ENCODE measurements at regions of chr10 and their contacts with region 1.

Region 1: GRCh38 chr10:3948843-3949242 is 163.8 kb upstream of the KLF6 start:
- DNase-seq: peak; percentile 83 to 93 (median 88)
- H3K4me3 ChIP-seq: no peak overlapping the region
- H3K4me3 Mint-ChIP-seq: peak overlapping the region; percentile 64 to 85 (median 83)
- H3K27ac ChIP-seq: peak overlapping the region; percentile 52
- H3K27ac Mint-ChIP-seq: peak overlapping the region; percentile 93 to 98 (median 97)
- H3K4me1 ChIP-seq: peaks cover 67% of the 10 kb centered on the region
- H3K4me1 Mint-ChIP-seq: peaks cover 43 to 80% (median 59%) of the 10 kb centered on the region in 4 donors
- H3K27me3 ChIP-seq: no peaks in the 10 kb centered on the region
- H3K27me3 Mint-ChIP-seq: no peaks in the 10 kb centered on the region

Region 2: DNA sequence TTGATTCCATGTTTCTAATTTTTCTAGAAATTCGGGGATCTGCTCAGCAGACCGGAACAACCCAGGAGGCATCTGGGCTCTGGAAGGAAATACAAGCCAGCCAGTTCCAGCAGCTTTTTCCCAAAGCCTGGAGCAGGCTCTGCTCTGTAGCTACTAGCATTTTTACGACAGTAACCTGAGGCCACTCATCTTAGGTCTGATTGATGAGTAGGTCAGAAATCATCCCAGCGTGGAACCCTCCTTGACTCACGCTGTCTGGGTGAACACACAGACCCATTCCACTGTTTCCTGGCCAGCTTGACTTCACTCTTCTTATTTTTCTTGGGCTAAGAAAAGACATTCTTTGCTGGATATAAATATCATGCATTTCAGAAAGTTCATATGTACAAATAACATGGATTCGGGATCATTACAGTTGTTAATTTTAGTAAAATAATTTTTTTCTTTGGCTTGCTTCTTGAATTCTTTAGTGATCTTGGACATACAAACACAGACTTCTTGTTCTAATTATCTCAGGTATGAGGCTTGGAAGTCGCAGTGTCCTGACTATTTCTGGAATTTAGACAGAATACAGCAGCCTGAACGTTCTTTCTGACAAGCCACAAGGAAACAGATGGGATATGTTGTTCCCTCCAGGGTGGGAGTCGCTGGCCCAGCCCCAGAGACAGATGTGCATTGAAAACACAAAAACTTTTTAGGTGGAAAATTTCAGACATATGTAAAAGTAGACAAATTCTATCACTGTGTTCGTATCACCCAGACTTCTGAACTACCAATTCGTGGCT is 721.7 kb before region 1 on chr10:
- CTCF ChIA-PET with region 1: no interaction called
- POLR2A ChIA-PET with region 1: no interaction called
- intact Hi-C with region 1: loop called (anchors 5 kb)
- DNase-seq: no peak
- H3K4me3 ChIP-seq: no peak overlapping the region
- H3K4me3 Mint-ChIP-seq: peak overlapping the region in 6 of 8 donors; percentile 6 to 67 (median 56)
- H3K27ac ChIP-seq: no peak overlapping the region
- H3K27ac Mint-ChIP-seq: peak overlapping the region in 4 of 7 donors; percentile 65 to 94 (median 86)
- H3K4me1 ChIP-seq: peaks cover 19% of the 10 kb centered on the region
- H3K4me1 Mint-ChIP-seq: peaks cover 0 to 20% (median 16%) of the 10 kb centered on the region in 4 donors
- H3K27me3 ChIP-seq: no peaks in the 10 kb centered on the region
- H3K27me3 Mint-ChIP-seq: no peaks in the 10 kb centered on the region

Region 3: GRCh38 chr10:3776796-3777571 is 171.9 kb before region 1 on chr10:
- CTCF ChIA-PET with region 1: no interaction called
- POLR2A ChIA-PET with region 1: interaction called, 248 read pairs
- intact Hi-C with region 1: no loop called
- DNase-seq: peak; percentile 75 to 87 (median 81)
- H3K4me3 ChIP-seq: peak overlapping the region in 1 of 2 donors; percentile 6
- H3K4me3 Mint-ChIP-seq: peak overlapping the region; percentile 22 to 97 (median 70)
- H3K27ac ChIP-seq: peak overlapping the region; percentile 48
- H3K27ac Mint-ChIP-seq: peak overlapping the region; percentile 63 to 100 (median 97)
- H3K4me1 ChIP-seq: peaks cover 81% of the 10 kb centered on the region
- H3K4me1 Mint-ChIP-seq: peaks cover 51 to 84% (median 68%) of the 10 kb centered on the region in 4 donors
- H3K27me3 ChIP-seq: no peaks in the 10 kb centered on the region
- H3K27me3 Mint-ChIP-seq: no peaks in the 10 kb centered on the region

Region 4: DNA sequence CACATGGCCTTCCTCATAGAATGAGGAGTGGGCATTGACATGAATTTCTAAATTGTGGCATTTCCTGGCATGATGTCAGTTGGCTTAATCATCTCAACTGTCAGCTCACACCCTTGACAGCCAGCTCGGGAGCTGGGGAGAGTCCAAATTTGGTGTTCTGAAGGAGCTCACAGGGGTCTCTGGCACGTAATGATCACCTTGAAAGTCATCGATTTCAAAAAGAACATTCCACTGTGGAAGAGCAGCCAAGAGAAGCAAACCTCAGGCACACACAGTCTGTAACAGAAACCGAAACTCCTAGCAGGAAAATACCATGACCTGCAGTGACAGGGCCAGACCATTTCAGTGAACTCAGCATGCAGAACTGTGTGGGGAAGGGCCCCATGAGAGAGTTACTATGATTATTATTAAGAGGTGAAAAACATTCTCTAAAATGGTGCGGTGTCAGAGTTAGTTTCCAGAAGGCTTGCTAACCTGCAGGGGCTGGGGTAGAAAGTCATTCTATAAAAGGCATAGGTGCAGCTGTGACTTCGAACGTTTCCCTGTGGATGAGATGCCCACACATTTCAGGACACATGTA is 137.5 kb before region 1 on chr10:
- CTCF ChIA-PET with region 1: no interaction called
- POLR2A ChIA-PET with region 1: interaction called, 37 read pairs
- intact Hi-C with region 1: no loop called
- DNase-seq: peak; percentile 49 to 79 (median 66)
- H3K4me3 ChIP-seq: peak overlapping the region; percentile 1 to 39
- H3K4me3 Mint-ChIP-seq: peak overlapping the region; percentile 76 to 87 (median 82)
- H3K27ac ChIP-seq: peak overlapping the region; percentile 99
- H3K27ac Mint-ChIP-seq: no peak overlapping the region
- H3K4me1 ChIP-seq: peaks cover 79% of the 10 kb centered on the region
- H3K4me1 Mint-ChIP-seq: peaks cover 18 to 89% (median 66%) of the 10 kb centered on the region in 4 donors
- H3K27me3 ChIP-seq: no peaks in the 10 kb centered on the region
- H3K27me3 Mint-ChIP-seq: no peaks in the 10 kb centered on the region

Region 5: GRCh38 chr10:3935141-3935540 is 13.7 kb before region 1 on chr10:
- CTCF ChIA-PET with region 1: interaction called, 12 read pairs
- POLR2A ChIA-PET with region 1: interaction called, 55 read pairs
- intact Hi-C with region 1: loop called (anchors 1 kb)
- DNase-seq: peak; percentile 57 to 68 (median 63)
- H3K4me3 ChIP-seq: peak overlapping the region in 1 of 2 donors; percentile 56
- H3K4me3 Mint-ChIP-seq: peak overlapping the region; percentile 84 to 94 (median 90)
- H3K27ac ChIP-seq: peak overlapping the region; percentile 61
- H3K27ac Mint-ChIP-seq: peak overlapping the region; percentile 85 to 99 (median 97)
- H3K4me1 ChIP-seq: peaks cover 20% of the 10 kb centered on the region
- H3K4me1 Mint-ChIP-seq: peaks cover 26 to 37% (median 28%) of the 10 kb centered on the region in 4 donors
- H3K27me3 ChIP-seq: no peaks in the 10 kb centered on the region
- H3K27me3 Mint-ChIP-seq: no peaks in the 10 kb centered on the region

Region 6: GRCh38 chr10:3972460-3973301 is 23.8 kb after region 1 on chr10:
- CTCF ChIA-PET with region 1: interaction called, 6 read pairs
- POLR2A ChIA-PET with region 1: interaction called, 111 read pairs
- intact Hi-C with region 1: loop called (anchors 2 kb)
- DNase-seq: peak in 4 of 5 donors; percentile 26 to 62 (median 44)
- H3K4me3 ChIP-seq: no peak overlapping the region
- H3K4me3 Mint-ChIP-seq: peak overlapping the region; percentile 72 to 95 (median 84)
- H3K27ac ChIP-seq: peak overlapping the region; percentile 70
- H3K27ac Mint-ChIP-seq: peak overlapping the region; percentile 88 to 98 (median 96)
- H3K4me1 ChIP-seq: peaks cover 85% of the 10 kb centered on the region
- H3K4me1 Mint-ChIP-seq: peaks cover 44 to 61% (median 53%) of the 10 kb centered on the region in 4 donors
- H3K27me3 ChIP-seq: no peaks in the 10 kb centered on the region
- H3K27me3 Mint-ChIP-seq: no peaks in the 10 kb centered on the region

Region 7: DNA sequence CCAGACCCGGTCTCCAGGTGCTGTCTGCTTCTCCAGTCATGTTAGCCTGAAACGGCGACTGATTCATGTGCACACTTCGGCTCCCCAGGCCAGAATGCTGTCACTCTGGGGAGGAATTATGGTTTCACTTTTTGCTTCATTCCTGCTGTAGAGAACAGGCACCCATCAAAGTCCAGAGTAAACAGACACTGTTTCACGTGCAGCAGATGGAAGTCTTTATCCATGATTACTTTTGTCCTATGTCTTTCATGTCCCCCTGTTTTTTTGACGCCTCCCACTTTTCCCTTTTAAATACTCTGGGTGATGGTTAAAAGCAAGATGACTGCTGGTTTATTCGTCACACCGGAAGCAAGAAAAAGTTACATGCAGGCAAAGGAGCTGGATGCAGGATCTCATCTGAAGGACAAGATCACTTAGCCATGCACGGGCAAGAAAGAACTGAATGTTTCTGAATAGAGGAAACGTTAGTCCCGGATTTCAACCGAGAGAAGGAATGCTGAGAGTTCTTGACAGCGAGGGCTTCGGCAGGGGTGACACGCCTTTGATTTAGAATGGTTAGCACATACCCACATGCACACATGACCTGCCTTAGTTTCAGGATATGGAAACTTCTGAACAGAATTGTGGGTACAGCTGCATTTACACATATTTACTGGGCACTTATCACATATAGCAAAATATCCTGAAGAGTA is 86.2 kb after region 1 on chr10:
- CTCF ChIA-PET with region 1: no interaction called
- POLR2A ChIA-PET with region 1: no interaction called
- intact Hi-C with region 1: no loop called
- DNase-seq: peak in 3 of 5 donors; percentile 7 to 21 (median 16)
- H3K4me3 ChIP-seq: peak overlapping the region in 1 of 2 donors; percentile 2
- H3K4me3 Mint-ChIP-seq: peak overlapping the region; percentile 29 to 90 (median 82)
- H3K27ac ChIP-seq: peak overlapping the region; percentile 26
- H3K27ac Mint-ChIP-seq: peak overlapping the region; percentile 57 to 89 (median 76)
- H3K4me1 ChIP-seq: peaks cover 27% of the 10 kb centered on the region
- H3K4me1 Mint-ChIP-seq: peaks cover 17 to 31% (median 26%) of the 10 kb centered on the region in 4 donors
- H3K27me3 ChIP-seq: no peaks in the 10 kb centered on the region
- H3K27me3 Mint-ChIP-seq: no peaks in the 10 kb centered on the region

Measured in CD4-positive, alpha-beta memory T cell (primary cell).